ENCODE measurements at regions of chr10 and their contacts with region 1.

Region 1: DNA sequence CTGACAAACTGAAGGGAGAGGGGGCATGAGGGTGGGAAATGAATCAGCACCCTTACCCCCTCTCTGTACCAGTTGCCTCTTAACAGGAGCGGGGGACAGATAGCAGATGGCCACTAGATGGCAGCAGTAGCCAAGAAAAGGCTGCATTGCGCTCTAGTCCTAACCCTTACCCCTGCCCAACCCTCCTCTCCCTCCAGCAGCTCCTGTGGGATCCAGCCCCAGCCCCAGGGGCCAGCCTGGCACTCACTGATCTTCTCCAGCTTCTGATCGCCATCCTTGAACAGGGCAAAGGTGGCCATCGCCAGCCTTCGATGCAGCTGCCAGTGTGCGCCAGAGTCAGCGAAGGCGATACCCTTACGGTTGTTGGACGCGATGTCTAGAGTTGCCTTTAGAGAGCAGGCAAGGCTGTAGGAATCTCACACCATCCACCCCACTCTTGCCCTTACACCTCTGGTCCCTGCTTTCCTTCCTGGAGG is 2.2 kb downstream of the CYP17A1 start:
- DNase-seq: peak; percentile 62 to 88
- H3K4me3 ChIP-seq: no peak overlapping the region
- H3K27ac ChIP-seq: no peak overlapping the region
- H3K4me1 ChIP-seq: 0 out of 7 replicates have a peak, but pooled peaks cover 0 to 2% (median 0%) of the 10 kb centered on the region in 4 experiments
- H3K27me3 ChIP-seq: no peaks in the 10 kb centered on the region; a peak in 1 of 7 replicates
- CTCF ChIP-seq: peak; percentile 88 to 96 (median 89)
- EP300 ChIP-seq: no peak
- POLR2A ChIP-seq: no peak
- RAD21 ChIP-seq: peak; percentile 96 to 99

Region 2: GRCh38 chr10:102450194-102450938 is 384.7 kb before region 1 on chr10:
- CTCF ChIA-PET with region 1: no interaction called
- POLR2A ChIA-PET with region 1: no interaction called
- DNase-seq: peak in 1 of 2 experiments; percentile 84
- H3K4me3 ChIP-seq: peak overlapping the region; percentile 87 to 99 (median 98)
- H3K27ac ChIP-seq: peak overlapping the region; percentile 72
- H3K4me1 ChIP-seq: peaks cover 5 to 26% (median 18%) of the 10 kb centered on the region in 4 experiments
- H3K27me3 ChIP-seq: no peaks in the 10 kb centered on the region
- CTCF ChIP-seq: no peak
- EP300 ChIP-seq: no peak
- POLR2A ChIP-seq: no peak; a peak in 1 of 3 replicates
- RAD21 ChIP-seq: no peak; a peak in 1 of 4 replicates

Region 3: GRCh38 chr10:102815790-102816549 is 19.1 kb before region 1 on chr10:
- CTCF ChIA-PET with region 1: interaction called, 13 read pairs
- POLR2A ChIA-PET with region 1: interaction called, 3 read pairs
- DNase-seq: no peak
- H3K4me3 ChIP-seq: no peak overlapping the region
- H3K27ac ChIP-seq: no peak overlapping the region; the same call in 1 of the 2 replicates
- H3K4me1 ChIP-seq: peaks cover 0 to 7% (median 2%) of the 10 kb centered on the region in 4 experiments; a peak in 4 of 7 replicates
- H3K27me3 ChIP-seq: no peaks in the 10 kb centered on the region
- CTCF ChIP-seq: no peak
- EP300 ChIP-seq: no peak
- POLR2A ChIP-seq: no peak
- RAD21 ChIP-seq: no peak

Region 4: DNA sequence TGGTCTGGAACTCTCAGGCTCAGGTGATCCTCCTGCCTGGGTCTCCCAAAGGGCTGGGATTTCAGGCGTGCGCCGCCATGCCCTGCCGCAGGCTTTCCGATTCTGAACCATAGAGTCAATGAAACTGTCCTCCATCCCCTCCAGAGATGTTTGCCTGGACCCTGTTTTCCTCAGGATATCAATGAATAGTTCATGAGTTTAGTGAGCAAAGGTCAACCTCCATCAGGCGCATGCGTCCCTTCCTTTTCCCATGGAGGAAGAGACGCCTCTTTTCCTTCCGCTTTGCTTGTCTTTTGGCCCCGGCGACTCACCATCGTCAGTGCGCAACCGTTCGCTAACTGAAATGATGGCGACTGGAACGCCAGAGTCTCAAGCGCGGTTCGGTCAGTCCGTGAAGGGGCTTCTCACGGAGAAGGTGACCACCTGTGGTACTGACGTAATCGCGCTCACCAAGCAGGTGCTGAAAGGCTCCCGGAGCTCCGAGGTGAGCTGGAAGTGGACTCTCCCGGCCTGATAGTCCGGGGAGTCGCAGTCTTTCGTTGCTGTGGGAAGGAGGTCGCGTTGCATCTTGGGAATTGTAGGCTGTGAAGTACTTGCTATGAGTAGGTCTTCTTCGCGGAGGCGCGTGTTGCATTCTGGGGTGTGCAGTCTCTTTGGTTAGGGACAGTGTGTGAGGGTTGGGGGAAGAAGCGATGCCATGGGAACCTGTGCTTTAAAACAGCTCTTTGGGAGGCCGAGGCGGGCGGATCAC is 19.1 kb after region 1 on chr10 and contains the start of gene BORCS7:
- CTCF ChIA-PET with region 1: interaction called, 42 read pairs
- POLR2A ChIA-PET with region 1: interaction called, 5 read pairs
- DNase-seq: peak; percentile 86
- H3K4me3 ChIP-seq: peak within 1 kb of the TSS; percentile 81 to 99 (median 91)
- H3K27ac ChIP-seq: peak within 1 kb of the TSS; percentile 93
- H3K4me1 ChIP-seq: peaks cover 0 to 2% (median 0%) of the 10 kb centered on the region in 4 experiments; a peak in 2 of 7 replicates
- H3K27me3 ChIP-seq: no peaks in the 10 kb centered on the region
- CTCF ChIP-seq: no peak
- EP300 ChIP-seq: no peak
- POLR2A ChIP-seq: peak; percentile 56 to 96
- RAD21 ChIP-seq: no peak
- total RNA-seq, gene BORCS7: 2.3 and 3.7 TPM in 2 replicates

Region 5: GRCh38 chr10:102917962-102918816 is 83.1 kb after region 1 on chr10 and contains the start of gene CNNM2:
- CTCF ChIA-PET with region 1: interaction called, 14 read pairs
- POLR2A ChIA-PET with region 1: interaction called, 3 read pairs
- DNase-seq: peak; percentile 98 to 100
- H3K4me3 ChIP-seq: peak within 1 kb of the TSS; percentile 89 to 96 (median 92)
- H3K27ac ChIP-seq: peak within 1 kb of the TSS; percentile 93
- H3K4me1 ChIP-seq: peaks cover 3 to 10% (median 7%) of the 10 kb centered on the region in 4 experiments; a peak in 6 of 7 replicates
- H3K27me3 ChIP-seq: peaks cover 0 to 12% (median 11%) of the 10 kb centered on the region in 4 experiments; a peak in 5 of 7 replicates
- CTCF ChIP-seq: no peak
- EP300 ChIP-seq: no peak
- POLR2A ChIP-seq: peak in 1 of 2 experiments; percentile 59; a peak in 2 of 3 replicates
- RAD21 ChIP-seq: no peak
- total RNA-seq, gene CNNM2: 20.3 and 23.6 TPM in 2 replicates

Region 6: DNA sequence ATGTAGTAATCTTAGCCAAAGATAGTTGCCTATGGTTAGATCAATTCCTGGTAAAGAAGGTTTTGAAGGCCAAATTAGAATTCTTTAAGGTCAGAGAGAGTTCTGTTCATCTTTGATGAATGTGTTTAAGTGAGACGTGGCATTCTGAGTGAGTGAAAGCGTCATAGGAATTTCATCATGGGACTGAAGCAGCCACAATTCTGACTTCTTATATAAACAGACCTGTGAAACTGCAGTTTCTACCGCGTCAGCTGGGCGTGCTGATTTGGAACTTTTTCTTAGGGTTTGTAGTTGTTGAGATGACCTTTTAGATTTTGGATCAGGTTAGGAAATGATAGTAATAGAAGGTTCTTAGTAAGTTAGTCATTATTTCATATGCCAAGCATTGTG is 186.8 kb after region 1 on chr10:
- CTCF ChIA-PET with region 1: no interaction called
- POLR2A ChIA-PET with region 1: no interaction called
- DNase-seq: no peak
- H3K4me3 ChIP-seq: no peak overlapping the region
- H3K27ac ChIP-seq: no peak overlapping the region
- H3K4me1 ChIP-seq: peaks cover 0 to 4% (median 1%) of the 10 kb centered on the region in 4 experiments; a peak in 1 of 7 replicates
- H3K27me3 ChIP-seq: no peaks in the 10 kb centered on the region
- CTCF ChIP-seq: no peak
- EP300 ChIP-seq: no peak
- POLR2A ChIP-seq: no peak
- RAD21 ChIP-seq: no peak

Region 7: GRCh38 chr10:103069453-103070331 is 234.6 kb after region 1 on chr10:
- CTCF ChIA-PET with region 1: interaction called, 83 read pairs
- POLR2A ChIA-PET with region 1: no interaction called
- DNase-seq: peak; percentile 33 to 83
- H3K4me3 ChIP-seq: no peak overlapping the region
- H3K27ac ChIP-seq: no peak overlapping the region
- H3K4me1 ChIP-seq: no peaks in the 10 kb centered on the region
- H3K27me3 ChIP-seq: no peaks in the 10 kb centered on the region
- CTCF ChIP-seq: peak; percentile 69 to 85 (median 73)
- EP300 ChIP-seq: no peak
- POLR2A ChIP-seq: no peak
- RAD21 ChIP-seq: peak; percentile 95 to 96

Region 8: GRCh38 chr10:103350501-103351260 is 515.6 kb after region 1 on chr10 and contains the start of gene PCGF6:
- CTCF ChIA-PET with region 1: no interaction called
- POLR2A ChIA-PET with region 1: no interaction called
- DNase-seq: peak; percentile 70 to 96
- H3K4me3 ChIP-seq: peak within 1 kb of the TSS; percentile 72 to 83 (median 76)
- H3K27ac ChIP-seq: peak within 1 kb of the TSS; percentile 45; the same call in 1 of the 2 replicates
- H3K4me1 ChIP-seq: peaks cover 0 to 3% (median 1%) of the 10 kb centered on the region in 4 experiments; a peak in 4 of 7 replicates
- H3K27me3 ChIP-seq: no peaks in the 10 kb centered on the region
- CTCF ChIP-seq: no peak
- EP300 ChIP-seq: no peak
- POLR2A ChIP-seq: peak in 1 of 2 experiments; percentile 56; a peak in 2 of 3 replicates
- RAD21 ChIP-seq: no peak
- total RNA-seq, gene PCGF6: 16.2 and 18.6 TPM in 2 replicates